H1 (cell line): ENCODE measurements at regions of chr1 and their contacts with region 1.

Region 1: DNA sequence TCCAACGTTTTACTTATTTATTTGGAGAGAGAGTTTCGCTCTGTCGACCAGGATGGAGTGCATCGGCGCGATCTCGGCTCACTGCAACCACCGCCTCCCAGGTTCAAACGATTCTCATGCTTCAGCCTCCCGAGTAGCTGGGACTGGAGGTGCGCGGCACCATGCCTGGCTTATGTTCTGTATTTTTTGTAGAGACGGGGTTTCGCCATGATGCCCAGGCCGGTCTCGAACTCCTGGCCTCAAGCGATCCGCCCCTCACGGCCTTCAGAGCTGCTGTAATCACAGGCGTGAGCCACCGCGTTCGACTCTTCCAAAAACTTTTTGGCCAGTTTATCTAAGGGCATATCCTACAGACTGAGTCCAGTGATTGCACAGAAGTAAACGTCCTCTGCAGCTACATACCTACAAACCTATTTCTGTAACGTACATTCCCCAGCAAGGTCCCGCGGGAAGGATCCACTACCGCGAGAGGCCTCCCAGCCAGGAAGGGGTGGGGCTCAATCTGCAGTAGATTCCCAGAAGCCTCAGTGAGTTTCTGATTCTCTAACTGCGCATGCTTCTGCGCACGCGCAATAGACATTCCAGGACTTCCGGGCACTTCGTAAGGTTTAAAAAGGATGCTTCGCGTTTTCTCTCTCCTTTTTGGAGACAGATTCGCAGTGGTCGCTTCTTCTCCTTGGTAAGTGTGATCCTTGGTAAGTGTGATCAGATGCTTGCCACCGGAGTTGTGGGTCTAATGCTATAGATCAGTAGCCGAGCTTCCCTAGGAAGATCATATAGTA is at the start of gene RCC1:
- DNase-seq: peak; percentile 91 to 92
- H3K4me3 ChIP-seq: peak within 1 kb of the TSS; percentile 75 to 96 (median 90)
- H3K27ac ChIP-seq: peak within 1 kb of the TSS; percentile 95
- H3K4me1 ChIP-seq: peaks cover 5 to 17% (median 9%) of the 10 kb centered on the region in 4 experiments; a peak in 5 of 7 replicates
- H3K27me3 ChIP-seq: no peaks in the 10 kb centered on the region
- CTCF ChIP-seq: 0 out of 4 replicates have a peak, but pooled peaks of 1 of the 3 experiments have one; percentile 3
- EP300 ChIP-seq: no peak
- POLR2A ChIP-seq: peak; percentile 100
- RAD21 ChIP-seq: no peak
- total RNA-seq, gene RCC1: 98.4 and 101 TPM in 2 replicates

Region 2: GRCh38 chr1:28235755-28236655 is 269.6 kb before region 1 on chr1 and contains the start of gene ATP5IF1:
- CTCF ChIA-PET with region 1: no interaction called
- POLR2A ChIA-PET with region 1: interaction called, 39 read pairs
- DNase-seq: peak; percentile 88 to 90
- H3K4me3 ChIP-seq: peak within 1 kb of the TSS; percentile 94 to 99 (median 96)
- H3K27ac ChIP-seq: peak within 1 kb of the TSS; percentile 84
- H3K4me1 ChIP-seq: peaks cover 0 to 4% (median 4%) of the 10 kb centered on the region in 4 experiments; a peak in 4 of 7 replicates
- H3K27me3 ChIP-seq: no peaks in the 10 kb centered on the region
- CTCF ChIP-seq: no peak
- EP300 ChIP-seq: no peak
- POLR2A ChIP-seq: peak; percentile 86 to 94
- RAD21 ChIP-seq: no peak
- total RNA-seq, gene ATP5IF1: 198 and 202 TPM in 2 replicates

Region 3: DNA sequence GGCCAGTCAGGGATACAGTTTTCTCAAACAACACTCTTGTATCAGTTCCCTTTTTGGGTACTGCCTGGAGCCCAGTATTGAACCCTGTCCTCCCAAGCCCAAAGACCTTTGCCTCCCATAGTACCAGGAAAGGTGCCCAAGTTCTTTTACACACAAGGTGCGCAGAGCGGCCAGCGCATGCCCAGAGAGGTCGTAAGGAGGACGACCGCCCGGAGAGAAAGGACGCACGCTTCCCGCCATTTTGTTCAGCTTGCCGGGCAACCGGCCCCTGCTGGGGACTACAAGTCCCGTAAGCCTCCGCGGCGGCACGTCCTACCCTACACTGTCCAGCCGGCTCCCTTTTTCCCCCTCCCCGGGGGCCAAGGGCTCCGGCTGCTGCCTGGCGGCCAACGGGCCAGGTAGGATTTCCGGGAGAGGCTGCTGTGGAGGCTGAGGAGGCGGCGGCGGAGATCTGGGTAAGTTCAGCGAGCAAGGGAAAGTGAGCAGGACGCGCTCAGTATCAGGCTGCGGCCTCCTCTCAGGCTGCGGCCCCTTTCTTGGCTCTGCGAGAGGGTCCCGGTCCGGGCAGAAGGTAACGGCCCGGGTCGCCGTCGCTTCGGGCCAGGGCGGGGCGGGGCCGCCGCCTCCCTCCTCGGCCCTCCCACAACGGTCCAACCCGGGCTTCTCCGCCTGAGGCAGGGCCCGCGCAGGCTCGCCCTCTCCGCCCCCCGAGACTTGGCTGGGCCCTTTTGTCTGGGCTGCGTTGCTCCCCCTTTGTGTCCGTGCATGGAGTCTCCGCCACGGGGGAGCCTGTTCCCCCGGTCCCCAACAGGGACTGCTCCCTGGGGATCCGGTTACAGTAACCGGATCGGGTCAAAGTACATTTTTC is 136.0 kb before region 1 on chr1 and contains the start of gene PHACTR4:
- CTCF ChIA-PET with region 1: no interaction called
- POLR2A ChIA-PET with region 1: interaction called, 58 read pairs
- DNase-seq: peak; percentile 90 to 96
- H3K4me3 ChIP-seq: peak within 1 kb of the TSS; percentile 74 to 86 (median 79)
- H3K27ac ChIP-seq: peak within 1 kb of the TSS; percentile 82
- H3K4me1 ChIP-seq: no peaks in the 10 kb centered on the region; a peak in 1 of 7 replicates
- H3K27me3 ChIP-seq: no peaks in the 10 kb centered on the region
- CTCF ChIP-seq: no peak
- EP300 ChIP-seq: no peak
- POLR2A ChIP-seq: peak; percentile 84 to 93
- RAD21 ChIP-seq: no peak
- total RNA-seq, gene PHACTR4: 54.1 and 57.8 TPM in 2 replicates

Region 4: GRCh38 chr1:28470146-28470545 is 35.5 kb before region 1 on chr1:
- CTCF ChIA-PET with region 1: no interaction called
- POLR2A ChIA-PET with region 1: interaction called, 17 read pairs
- DNase-seq: no peak
- H3K4me3 ChIP-seq: no peak overlapping the region
- H3K27ac ChIP-seq: no peak overlapping the region
- H3K4me1 ChIP-seq: no peaks in the 10 kb centered on the region
- H3K27me3 ChIP-seq: no peaks in the 10 kb centered on the region
- CTCF ChIP-seq: no peak
- EP300 ChIP-seq: no peak
- POLR2A ChIP-seq: no peak
- RAD21 ChIP-seq: no peak

Region 5: GRCh38 chr1:28494737-28495136 is 10.9 kb before region 1 on chr1:
- CTCF ChIA-PET with region 1: interaction called, 5 read pairs
- POLR2A ChIA-PET with region 1: interaction called, 40 read pairs
- DNase-seq: no peak
- H3K4me3 ChIP-seq: no peak overlapping the region
- H3K27ac ChIP-seq: no peak overlapping the region
- H3K4me1 ChIP-seq: no peaks in the 10 kb centered on the region
- H3K27me3 ChIP-seq: no peaks in the 10 kb centered on the region
- CTCF ChIP-seq: no peak
- EP300 ChIP-seq: no peak
- POLR2A ChIP-seq: no peak
- RAD21 ChIP-seq: no peak

Region 6: GRCh38 chr1:28642847-28643635 is 137.4 kb after region 1 on chr1 and contains the start of gene TAF12:
- CTCF ChIA-PET with region 1: no interaction called
- POLR2A ChIA-PET with region 1: interaction called, 132 read pairs
- DNase-seq: peak; percentile 87 to 92
- H3K4me3 ChIP-seq: peak within 1 kb of the TSS; percentile 73 to 95 (median 86)
- H3K27ac ChIP-seq: peak within 1 kb of the TSS; percentile 84
- H3K4me1 ChIP-seq: peaks cover 0 to 5% (median 4%) of the 10 kb centered on the region in 4 experiments; a peak in 3 of 7 replicates
- H3K27me3 ChIP-seq: no peaks in the 10 kb centered on the region
- CTCF ChIP-seq: peak; percentile 52 to 59 (median 59)
- EP300 ChIP-seq: no peak
- POLR2A ChIP-seq: peak; percentile 92 to 94
- RAD21 ChIP-seq: peak; percentile 58 to 64
- total RNA-seq, gene TAF12: 23.7 and 27.2 TPM in 2 replicates